ENCODE measurements at regions of chr16 and their contacts with region 1.

Region 1: DNA sequence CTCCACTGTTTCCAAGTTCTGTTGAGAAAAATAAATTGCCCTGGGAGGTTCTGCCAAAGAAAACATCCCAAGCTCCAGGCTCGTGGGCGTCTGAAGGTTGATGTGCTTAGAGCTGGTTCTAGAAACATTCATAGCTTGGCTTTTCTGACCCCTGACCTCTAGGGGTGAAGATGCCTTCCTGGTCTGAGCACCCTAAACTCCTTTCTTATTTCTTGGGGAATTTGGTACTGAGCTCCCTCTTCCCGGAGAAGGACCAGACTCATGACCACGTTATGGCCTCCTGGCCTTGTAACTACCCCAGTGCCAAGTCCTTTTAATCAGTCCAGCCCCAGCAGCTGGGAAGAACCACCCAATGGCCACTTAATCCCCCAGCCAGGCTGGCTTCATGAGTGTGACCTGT is 66.4 kb downstream of the MYH11 start:
- DNase-seq: no peak
- ATAC-seq: no peak
- H3K4me3 ChIP-seq: no peak overlapping the region
- H3K27ac ChIP-seq: peak overlapping the region in 1 of 12 donors; percentile 75
- H3K4me1 ChIP-seq: peaks cover 0 to 16% (median 0%) of the 10 kb centered on the region in 12 donors
- H3K27me3 ChIP-seq: no peaks in the 10 kb centered on the region
- CTCF ChIP-seq: no peak
- POLR2A ChIP-seq: no peak

Region 2: DNA sequence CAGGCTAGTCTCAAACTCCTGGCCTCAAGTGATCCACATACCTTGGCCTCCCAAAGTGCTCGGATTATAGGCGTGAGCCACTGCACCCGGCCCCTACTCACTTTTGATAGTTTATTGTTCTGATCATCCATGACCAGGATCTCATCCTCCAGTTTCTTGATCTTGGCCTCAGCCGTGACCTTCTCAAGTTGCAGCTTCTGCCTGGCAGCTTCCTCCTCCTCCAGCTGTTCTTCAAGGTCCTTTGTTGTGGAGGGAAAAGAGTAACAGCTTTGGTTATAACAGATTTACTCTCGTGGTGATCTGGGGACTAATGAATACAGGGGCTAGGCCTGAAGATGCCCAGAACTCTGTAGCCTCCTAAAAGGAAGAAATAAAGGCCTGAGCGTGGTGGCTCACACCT is 50.5 kb before region 1 on chr16:
- intact Hi-C with region 1: no loop called
- DNase-seq: no peak
- ATAC-seq: no peak
- H3K4me3 ChIP-seq: no peak overlapping the region
- H3K27ac ChIP-seq: peak overlapping the region in 1 of 12 donors; percentile 38
- H3K4me1 ChIP-seq: peaks cover 0 to 2% (median 0%) of the 10 kb centered on the region in 12 donors
- H3K27me3 ChIP-seq: no peaks in the 10 kb centered on the region
- CTCF ChIP-seq: no peak
- POLR2A ChIP-seq: no peak

Region 3: GRCh38 chr16:15857724-15858560 is 67.5 kb after region 1 on chr16:
- intact Hi-C with region 1: loop called in 1 of 10 experiments (anchors 10 kb)
- DNase-seq: peak; percentile 40 to 66 (median 63)
- ATAC-seq: peak; percentile 57 to 77 (median 74)
- H3K4me3 ChIP-seq: peak overlapping the region in 10 of 12 donors; percentile 35 to 62 (median 52)
- H3K27ac ChIP-seq: peak overlapping the region in 7 of 12 donors; percentile 20 to 91 (median 67)
- H3K4me1 ChIP-seq: peaks cover 0 to 21% (median 10%) of the 10 kb centered on the region in 12 donors
- H3K27me3 ChIP-seq: peaks cover 0 to 41% (median 15%) of the 10 kb centered on the region in 9 donors
- CTCF ChIP-seq: no peak
- POLR2A ChIP-seq: no peak

Region 4: DNA sequence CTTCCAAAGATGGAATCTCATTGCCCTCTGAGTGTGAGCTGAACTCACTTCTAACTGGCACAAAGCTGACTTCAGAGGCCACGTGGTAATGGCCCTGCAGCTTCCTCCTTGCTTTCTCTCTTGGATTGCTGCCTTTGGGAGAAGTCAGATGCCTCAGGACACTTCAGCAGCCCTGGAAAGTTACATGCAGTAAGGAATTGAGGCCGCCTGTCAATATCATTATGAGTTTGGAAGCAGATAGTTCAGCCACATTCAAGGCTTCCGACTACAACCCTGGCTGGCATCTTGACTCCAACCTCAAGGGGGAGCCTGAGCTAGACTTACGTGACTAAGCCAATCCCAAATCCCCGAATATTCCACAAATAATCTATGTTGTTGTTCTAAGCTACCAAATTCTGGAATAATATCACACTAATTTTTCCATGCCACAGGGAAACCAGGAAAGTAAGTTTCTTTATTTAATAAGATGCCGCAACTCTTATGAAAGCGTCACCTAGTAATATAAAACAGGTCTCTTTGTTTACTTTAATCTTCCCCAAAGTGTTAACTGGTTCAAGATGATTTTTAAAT is 84.4 kb after region 1 on chr16:
- intact Hi-C with region 1: no loop called
- DNase-seq: peak in 4 of 5 donors; percentile 29 to 40 (median 36)
- ATAC-seq: peak in 3 of 4 donors; percentile 76 to 90 (median 77)
- H3K4me3 ChIP-seq: no peak overlapping the region
- H3K27ac ChIP-seq: peak overlapping the region in 4 of 12 donors; percentile 9 to 76 (median 19)
- H3K4me1 ChIP-seq: peaks cover 0 to 16% (median 3%) of the 10 kb centered on the region in 12 donors
- H3K27me3 ChIP-seq: no peaks in the 10 kb centered on the region
- CTCF ChIP-seq: peak; percentile 49 to 82 (median 70)
- POLR2A ChIP-seq: no peak

Measured in heart left ventricle (tissue), 16 donors.